Spleen (tissue), 13 donors: ENCODE measurements at regions of chr15 and their contacts with region 1.

Region 1: GRCh38 chr15:62071711-62072308 is 5.0 kb downstream of the C2CD4A start:
- DNase-seq: no peak
- H3K4me3 ChIP-seq: no peak overlapping the region
- H3K27ac ChIP-seq: no peak overlapping the region
- H3K4me1 ChIP-seq: peaks cover 12 to 26% (median 22%) of the 10 kb centered on the region in 6 donors
- H3K27me3 ChIP-seq: peaks cover 0 to 32% (median 7%) of the 10 kb centered on the region in 7 donors
- CTCF ChIP-seq: peak; percentile 27 to 79 (median 67)
- POLR2A ChIP-seq: no peak

Region 2: GRCh38 chr15:61598655-61599054 is 473.2 kb before region 1 on chr15:
- intact Hi-C with region 1: no loop called
- DNase-seq: no peak
- H3K4me3 ChIP-seq: no peak overlapping the region
- H3K27ac ChIP-seq: no peak overlapping the region
- H3K4me1 ChIP-seq: no peaks in the 10 kb centered on the region
- H3K27me3 ChIP-seq: no peaks in the 10 kb centered on the region
- CTCF ChIP-seq: no peak
- POLR2A ChIP-seq: no peak

Region 3: GRCh38 chr15:61869656-61870055 is 202.2 kb before region 1 on chr15:
- intact Hi-C with region 1: loop called (anchors 10 kb)
- DNase-seq: no peak
- H3K4me3 ChIP-seq: no peak overlapping the region
- H3K27ac ChIP-seq: no peak overlapping the region
- H3K4me1 ChIP-seq: no peaks in the 10 kb centered on the region
- H3K27me3 ChIP-seq: no peaks in the 10 kb centered on the region
- CTCF ChIP-seq: no peak
- POLR2A ChIP-seq: no peak